HCT116 (cell line): ENCODE measurements at regions of chr5 and their contacts with region 1.

Region 1: DNA sequence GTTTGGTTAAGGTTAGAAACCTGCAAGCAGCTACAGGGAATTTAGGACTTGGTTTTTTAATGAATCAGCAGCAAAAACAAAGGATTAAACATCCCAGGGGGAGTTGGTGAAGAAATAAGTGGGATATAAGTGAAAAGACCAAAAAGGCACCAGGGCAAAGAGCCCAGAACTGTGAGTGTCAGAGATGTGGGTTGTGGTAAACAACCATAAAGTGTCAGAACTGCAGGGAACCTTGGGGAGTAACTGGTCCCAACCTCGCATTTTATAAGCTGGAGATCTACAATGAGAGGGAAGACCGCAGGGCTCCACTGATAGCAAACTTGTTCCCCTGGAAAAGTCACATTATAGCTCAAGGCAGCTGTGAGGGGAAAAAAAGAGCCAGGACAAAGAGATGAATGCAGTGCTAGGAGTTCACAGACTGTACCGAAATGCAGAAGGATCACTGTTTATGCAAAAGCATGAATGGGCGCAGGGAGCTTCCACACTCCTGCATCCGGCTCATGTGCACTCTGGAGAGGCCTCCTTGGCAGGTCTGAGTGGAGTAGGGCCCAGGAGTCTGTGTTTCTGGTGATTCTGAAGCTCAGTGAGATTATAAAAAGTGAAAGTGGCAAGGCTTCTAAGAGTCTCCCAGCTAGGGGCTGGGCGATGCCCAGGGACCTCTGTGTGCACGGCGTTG is 156.3 kb downstream of the GOLPH3 start:
- DNase-seq: no peak
- ATAC-seq: no peak
- H3K4me3 ChIP-seq: no peak overlapping the region
- H3K27ac ChIP-seq: no peak overlapping the region
- H3K4me1 ChIP-seq: no peaks in the 10 kb centered on the region
- H3K27me3 ChIP-seq: no peaks in the 10 kb centered on the region
- CTCF ChIP-seq: no peak
- POLR2A ChIP-seq: no peak
- RAD21 ChIP-seq: no peak

Region 2: DNA sequence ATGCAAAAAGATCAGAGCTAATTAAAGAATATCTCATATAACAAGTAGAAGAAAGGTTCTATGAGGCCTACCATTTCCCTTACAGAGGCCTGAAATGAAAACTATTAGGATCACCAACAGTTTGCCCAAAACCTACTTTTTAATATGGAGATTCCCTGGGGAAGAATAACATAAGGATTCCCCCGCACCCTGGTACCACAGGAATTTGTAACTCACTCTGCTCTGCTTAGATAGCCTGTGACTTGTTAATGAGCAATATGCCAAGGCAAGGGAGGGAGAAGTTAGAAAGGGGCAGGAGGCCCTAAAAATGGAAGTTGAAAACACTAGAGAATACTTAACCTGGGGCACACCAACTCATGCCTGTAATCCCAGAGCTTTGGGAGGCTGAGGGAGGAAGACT is 717.3 kb before region 1 on chr5:
- CTCF ChIA-PET with region 1: no interaction called
- POLR2A ChIA-PET with region 1: no interaction called
- RAD21 ChIA-PET with region 1: no interaction called
- intact Hi-C with region 1: loop called (anchors 5 kb)
- DNase-seq: no peak
- ATAC-seq: no peak
- H3K4me3 ChIP-seq: no peak overlapping the region
- H3K27ac ChIP-seq: no peak overlapping the region
- H3K4me1 ChIP-seq: no peaks in the 10 kb centered on the region
- H3K27me3 ChIP-seq: peaks cover 3% of the 10 kb centered on the region; the same call in 1 of the 2 replicates
- CTCF ChIP-seq: no peak
- POLR2A ChIP-seq: no peak
- RAD21 ChIP-seq: no peak

Region 3: DNA sequence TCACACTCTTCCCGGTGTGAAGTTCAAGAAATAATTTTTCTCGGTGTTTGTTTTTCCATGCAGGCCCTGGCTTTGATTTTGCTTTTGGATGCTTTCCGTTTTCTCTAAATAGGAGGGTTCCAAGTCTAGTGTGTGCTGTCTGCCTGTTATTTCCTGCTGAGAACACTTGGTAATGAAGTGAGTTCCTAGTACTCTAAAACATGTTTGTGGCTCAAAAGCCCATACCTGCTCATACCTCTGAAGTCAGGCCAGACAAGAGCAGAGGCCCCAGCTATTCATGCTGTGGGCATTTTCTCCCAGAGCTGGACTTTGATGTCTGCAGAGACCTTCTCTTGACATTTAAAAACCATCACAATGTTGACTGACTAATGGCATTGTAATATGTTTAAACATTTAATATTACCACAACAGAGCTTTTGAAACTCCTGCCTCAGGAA is 54.9 kb before region 1 on chr5:
- CTCF ChIA-PET with region 1: no interaction called
- POLR2A ChIA-PET with region 1: no interaction called
- RAD21 ChIA-PET with region 1: no interaction called
- intact Hi-C with region 1: no loop called
- DNase-seq: peak; percentile 38
- ATAC-seq: peak; percentile 87
- H3K4me3 ChIP-seq: no peak overlapping the region
- H3K27ac ChIP-seq: peak overlapping the region; percentile 27; the same call in 1 of the 2 replicates
- H3K4me1 ChIP-seq: peaks cover 21 to 26% of the 10 kb centered on the region in 2 experiments
- H3K27me3 ChIP-seq: no peaks in the 10 kb centered on the region
- CTCF ChIP-seq: no peak
- POLR2A ChIP-seq: no peak
- RAD21 ChIP-seq: no peak; the same call in 1 of the 2 replicates